GM12878 (cell line): ENCODE measurements at regions of chr1 and their contacts with region 1.

Region 1: DNA sequence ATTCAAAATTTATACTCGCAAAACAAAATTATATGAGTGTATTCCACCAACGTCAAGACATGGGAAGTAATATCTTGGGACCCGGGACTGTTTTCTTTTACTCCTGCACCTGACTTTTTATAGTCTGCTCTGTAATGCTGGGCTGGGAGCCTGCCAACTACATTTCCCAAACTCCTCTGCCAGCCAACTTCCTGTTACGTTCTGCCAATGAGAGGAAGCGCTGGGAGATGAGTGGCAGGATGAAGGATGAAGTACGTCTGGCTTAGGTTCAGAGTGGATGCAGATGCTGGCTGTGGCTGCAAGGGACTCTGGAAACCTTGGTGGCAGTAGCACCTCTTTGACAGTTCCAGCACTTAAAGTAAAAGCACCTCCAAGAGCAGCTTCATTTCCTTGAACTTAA is 59.6 kb downstream of the USP24 start:
- DNase-seq: no peak
- ATAC-seq: no peak
- H3K4me3 ChIP-seq: no peak overlapping the region
- H3K27ac ChIP-seq: no peak overlapping the region
- H3K4me1 ChIP-seq: peaks cover 13% of the 10 kb centered on the region; the same call in 1 of the 2 replicates
- H3K27me3 ChIP-seq: no peaks in the 10 kb centered on the region
- CTCF ChIP-seq: no peak
- EP300 ChIP-seq: no peak
- POLR2A ChIP-seq: no peak
- RAD21 ChIP-seq: no peak

Region 2: DNA sequence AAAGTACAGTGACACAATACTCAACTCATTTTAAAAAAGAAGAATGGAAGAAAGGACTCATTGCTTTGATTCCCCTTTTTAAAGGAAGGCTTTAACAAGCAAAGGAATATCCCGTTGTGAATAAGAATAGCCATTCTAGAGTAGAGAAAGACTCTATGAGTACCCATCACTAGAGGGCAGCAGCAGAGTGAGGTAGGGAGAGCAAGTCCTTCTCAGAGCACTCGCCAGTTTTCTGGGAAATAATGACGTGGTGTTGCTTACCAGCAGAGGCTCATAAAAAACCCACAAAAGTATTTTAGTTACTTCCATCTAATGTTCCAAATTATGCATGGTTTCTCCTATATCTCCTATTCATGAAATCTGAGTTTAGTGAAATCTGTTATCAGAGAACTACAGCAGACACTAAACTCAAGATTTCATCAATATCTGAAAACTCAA is 14.9 kb before region 1 on chr1:
- CTCF ChIA-PET with region 1: interaction called, 18 read pairs
- POLR2A ChIA-PET with region 1: no interaction called
- RAD21 ChIA-PET with region 1: interaction called, 3 read pairs
- SMC1A ChIA-PET with region 1: interaction called, 34 read pairs
- in situ Hi-C with region 1: no loop called
- intact Hi-C with region 1: no loop called
- DNase-seq: peak; percentile 11
- ATAC-seq: peak; percentile 97
- H3K4me3 ChIP-seq: no peak overlapping the region
- H3K27ac ChIP-seq: no peak overlapping the region
- H3K4me1 ChIP-seq: no peaks in the 10 kb centered on the region
- H3K27me3 ChIP-seq: no peaks in the 10 kb centered on the region
- CTCF ChIP-seq: peak; percentile 70 to 84 (median 75)
- EP300 ChIP-seq: no peak
- POLR2A ChIP-seq: no peak
- RAD21 ChIP-seq: peak; percentile 94